Tibial artery (tissue), 4 donors: ENCODE measurements at regions of chr19 and their contacts with region 1.

Region 1: GRCh38 chr19:50476224-50476942 is at the starts of genes EMC10 and GARIN5A:
- DNase-seq: peak; percentile 68 to 90
- H3K4me3 ChIP-seq: peak within 1 kb of the TSS; percentile 86 to 90
- H3K27ac ChIP-seq: peak within 1 kb of the TSS; percentile 69 to 76
- H3K4me1 ChIP-seq: peaks cover 0 to 21% (median 14%) of the 10 kb centered on the region in 4 donors
- H3K27me3 ChIP-seq: no peaks in the 10 kb centered on the region
- CTCF ChIP-seq: no peak

Region 2: DNA sequence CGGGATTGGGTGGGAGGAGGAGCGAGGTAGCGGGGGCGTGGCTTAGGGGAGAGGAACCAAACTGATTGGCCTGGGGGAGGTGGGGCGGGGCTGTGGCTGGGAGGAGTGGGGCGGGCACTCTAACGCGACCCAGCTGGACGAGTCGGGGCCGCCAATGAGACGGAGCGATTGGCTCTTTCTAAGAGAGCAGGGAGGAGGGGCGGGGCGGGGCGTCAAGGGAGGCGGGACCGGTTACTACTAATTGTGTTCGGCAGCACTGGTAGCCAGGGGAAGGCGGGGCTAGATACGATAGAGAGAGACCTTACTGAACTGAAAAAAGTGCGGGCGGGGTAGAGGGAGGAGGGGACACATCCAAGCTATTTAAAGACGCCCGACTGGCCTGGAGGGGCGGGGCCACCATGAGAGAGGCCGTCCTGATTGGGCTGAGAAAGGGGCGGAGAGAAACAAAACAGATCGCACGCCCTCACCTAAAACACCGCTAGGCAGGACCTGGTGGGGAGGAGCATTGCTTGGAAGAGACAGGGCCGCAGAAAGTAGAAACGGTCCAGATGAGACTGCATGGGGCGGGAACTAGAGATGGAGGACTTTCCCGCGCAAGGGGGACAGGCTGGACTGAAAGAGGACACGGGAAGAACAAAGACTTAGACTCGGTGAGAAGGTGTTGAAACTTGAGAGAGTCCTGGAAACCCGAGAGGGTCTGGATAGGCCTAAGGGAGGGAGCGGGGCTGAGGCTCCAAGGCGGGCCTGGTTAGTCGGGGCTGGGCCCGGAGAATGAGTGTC is 147.0 kb before region 1 on chr19 and contains the start of gene KCNC3:
- intact Hi-C with region 1: no loop called
- DNase-seq: peak; percentile 96
- H3K4me3 ChIP-seq: peak within 1 kb of the TSS; percentile 14 to 39
- H3K27ac ChIP-seq: no peak within 1 kb of the TSS
- H3K4me1 ChIP-seq: peaks cover 0 to 52% (median 34%) of the 10 kb centered on the region in 4 donors
- H3K27me3 ChIP-seq: peaks cover 7 to 83% of the 10 kb centered on the region in 2 donors
- CTCF ChIP-seq: no peak

Region 3: GRCh38 chr19:50511068-50511822 is 34.9 kb after region 1 on chr19 and contains the start of gene JOSD2:
- intact Hi-C with region 1: loop called (anchors 1 kb)
- DNase-seq: peak; percentile 99
- H3K4me3 ChIP-seq: peak within 1 kb of the TSS; percentile 75 to 79
- H3K27ac ChIP-seq: peak within 1 kb of the TSS; percentile 83 to 84
- H3K4me1 ChIP-seq: peaks cover 0 to 16% (median 13%) of the 10 kb centered on the region in 4 donors
- H3K27me3 ChIP-seq: no peaks in the 10 kb centered on the region
- CTCF ChIP-seq: peak in 1 of 2 experiments; percentile 30

Region 4: DNA sequence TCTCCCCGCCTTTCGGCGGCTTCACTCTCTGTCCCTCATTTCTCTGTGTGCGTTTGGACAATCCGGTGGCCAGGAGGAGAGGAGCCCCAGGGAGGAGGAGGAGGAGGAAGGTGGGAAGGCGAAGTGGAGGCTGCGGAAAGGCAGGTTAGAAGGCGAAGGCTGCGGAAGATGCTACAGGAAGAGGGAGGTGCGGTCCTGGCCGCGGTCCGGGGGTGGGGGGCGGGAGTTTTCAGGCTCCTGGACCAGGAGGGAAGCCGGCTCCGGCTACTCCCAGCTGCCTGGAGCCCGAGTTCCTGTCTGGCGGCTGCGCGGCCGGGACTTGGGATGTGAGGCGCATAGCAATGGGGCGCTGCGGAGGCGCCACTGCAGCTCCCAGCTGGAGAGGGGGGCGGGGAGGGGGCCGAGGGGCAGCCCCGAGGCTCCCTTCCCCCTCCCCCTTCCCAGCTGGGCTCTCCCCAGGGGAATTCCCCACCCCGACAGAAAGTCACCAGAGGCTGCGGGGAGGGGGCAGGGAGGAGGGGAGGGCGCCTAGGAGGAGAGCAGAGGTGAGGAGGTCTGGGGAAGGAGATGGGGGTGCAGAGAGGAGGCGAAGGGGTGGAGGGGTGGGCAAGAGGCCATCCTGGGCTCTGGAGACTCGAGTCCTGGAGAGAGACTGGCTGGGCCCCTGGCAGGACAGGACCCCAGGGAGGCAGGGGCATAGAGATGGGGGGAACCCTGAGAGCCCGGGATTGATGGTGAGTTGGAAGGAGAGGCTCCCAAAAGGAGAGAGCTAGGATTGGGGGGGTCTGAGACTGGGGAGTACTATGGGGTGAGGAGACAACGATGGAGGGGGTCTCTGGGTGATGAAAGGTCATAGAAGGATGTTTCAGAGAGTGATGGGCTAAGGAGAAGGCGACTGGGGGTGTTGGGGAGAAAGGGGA is 89.9 kb after region 1 on chr19:
- intact Hi-C with region 1: no loop called
- DNase-seq: no peak
- H3K4me3 ChIP-seq: no peak overlapping the region
- H3K27ac ChIP-seq: no peak overlapping the region
- H3K4me1 ChIP-seq: peaks cover 0 to 20% (median 9%) of the 10 kb centered on the region in 4 donors
- H3K27me3 ChIP-seq: peaks cover 0 to 99% of the 10 kb centered on the region in 2 donors
- CTCF ChIP-seq: no peak